Transverse colon (tissue), 4 donors: ENCODE measurements at regions of chr11 and their contacts with region 1.

Region 1: DNA sequence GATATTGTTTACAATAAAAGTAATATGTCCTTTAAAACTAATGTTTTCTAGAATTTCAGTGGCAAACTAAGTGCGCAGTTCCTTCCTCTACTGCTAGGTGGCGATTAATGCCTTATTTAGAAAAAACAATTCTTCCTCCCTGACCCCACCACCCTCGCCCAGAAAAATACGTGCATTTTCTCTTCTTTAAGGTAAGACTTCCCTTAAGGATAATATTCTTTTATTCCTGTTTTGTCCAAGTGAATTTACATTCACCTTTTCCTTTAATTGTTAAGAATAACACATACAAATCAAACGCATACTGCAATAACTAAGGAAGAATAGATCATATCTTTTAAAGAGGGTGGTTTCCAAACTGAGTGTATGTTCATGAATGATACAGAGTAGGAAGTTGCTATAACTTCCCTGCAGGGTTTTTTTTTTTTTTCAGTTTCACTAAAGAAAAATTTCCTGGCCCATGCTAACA is 17.0 kb upstream of the PSMA1 start:
- DNase-seq: peak; percentile 32
- H3K4me3 ChIP-seq: peak overlapping the region in 1 of 4 donors; percentile 20
- H3K27ac ChIP-seq: peak overlapping the region in 2 of 4 donors; percentile 59 to 70
- H3K4me1 ChIP-seq: peaks cover 0 to 43% (median 11%) of the 10 kb centered on the region in 4 donors
- H3K27me3 ChIP-seq: no peaks in the 10 kb centered on the region
- CTCF ChIP-seq: peak; percentile 81 to 92 (median 85)
- EP300 ChIP-seq: no peak
- POLR2A ChIP-seq: no peak

Region 2: DNA sequence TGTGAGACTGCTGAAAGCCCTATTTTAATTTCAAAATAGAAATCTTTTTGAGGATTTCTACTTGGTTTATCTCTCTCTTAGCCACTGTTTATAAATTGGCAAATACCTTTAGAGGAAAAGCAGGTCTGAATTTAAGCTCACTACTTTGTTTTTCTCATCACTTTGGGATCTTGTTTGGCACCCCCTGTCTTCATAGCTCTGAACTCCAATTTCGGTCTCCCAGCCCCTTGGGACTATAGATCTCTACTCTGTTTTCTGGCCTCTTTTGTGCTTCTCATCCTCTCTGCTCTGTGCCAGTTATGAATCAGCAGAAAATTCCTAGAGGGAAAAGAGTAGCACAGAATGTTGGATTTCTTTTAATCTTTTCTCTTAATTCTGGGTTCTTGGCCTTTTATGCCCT is 236.6 kb after region 1 on chr11:
- in situ Hi-C with region 1: no loop called
- intact Hi-C with region 1: loop called (anchors 10 kb)
- DNase-seq: no peak
- H3K4me3 ChIP-seq: no peak overlapping the region
- H3K27ac ChIP-seq: peak overlapping the region in 1 of 4 donors; percentile 13
- H3K4me1 ChIP-seq: peaks cover 0 to 4% (median 0%) of the 10 kb centered on the region in 4 donors
- H3K27me3 ChIP-seq: no peaks in the 10 kb centered on the region
- CTCF ChIP-seq: peak in 1 of 5 experiments; percentile 5
- EP300 ChIP-seq: no peak
- POLR2A ChIP-seq: no peak

Region 3: DNA sequence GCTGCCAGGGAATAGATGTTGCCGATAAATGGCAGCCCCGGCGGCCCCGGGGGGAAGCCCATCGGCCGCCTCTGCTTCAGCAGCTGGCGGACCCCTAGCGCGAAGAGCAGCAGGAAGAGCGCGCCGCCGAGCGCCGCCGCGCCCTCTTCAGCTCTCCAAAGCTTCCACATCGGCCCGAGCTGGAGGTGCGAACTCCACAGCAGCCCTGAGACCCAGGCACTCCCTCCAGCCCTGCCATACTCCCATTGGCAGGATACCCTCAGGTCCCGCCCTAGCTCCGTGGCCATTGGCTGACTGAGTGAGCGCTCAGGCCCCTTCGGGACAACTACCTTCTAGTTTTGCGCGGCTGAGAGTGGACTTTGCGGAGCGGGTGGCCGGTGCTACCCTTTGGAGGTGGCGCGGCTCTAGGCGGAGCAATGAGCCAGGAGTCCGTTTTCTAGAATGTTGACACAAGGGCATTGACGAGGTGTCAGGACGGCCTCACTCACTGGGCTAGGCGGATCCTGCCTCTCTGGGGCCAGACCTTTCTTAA is 354.9 kb after region 1 on chr11 and contains the start of gene CYP2R1:
- in situ Hi-C with region 1: loop called in 1 of 4 experiments (anchors 10 kb)
- intact Hi-C with region 1: no loop called
- DNase-seq: peak; percentile 98
- H3K4me3 ChIP-seq: peak within 1 kb of the TSS; percentile 55 to 78 (median 64)
- H3K27ac ChIP-seq: peak within 1 kb of the TSS; percentile 92 to 98 (median 95)
- H3K4me1 ChIP-seq: peaks cover 4 to 39% (median 9%) of the 10 kb centered on the region in 4 donors
- H3K27me3 ChIP-seq: no peaks in the 10 kb centered on the region
- CTCF ChIP-seq: no peak
- EP300 ChIP-seq: no peak
- POLR2A ChIP-seq: peak; percentile 86
- total RNA-seq, gene CYP2R1: 26.1 to 54.2 (median 44.6) TPM